ENCODE measurements at regions of chr20 and their contacts with region 1.

Region 1: DNA sequence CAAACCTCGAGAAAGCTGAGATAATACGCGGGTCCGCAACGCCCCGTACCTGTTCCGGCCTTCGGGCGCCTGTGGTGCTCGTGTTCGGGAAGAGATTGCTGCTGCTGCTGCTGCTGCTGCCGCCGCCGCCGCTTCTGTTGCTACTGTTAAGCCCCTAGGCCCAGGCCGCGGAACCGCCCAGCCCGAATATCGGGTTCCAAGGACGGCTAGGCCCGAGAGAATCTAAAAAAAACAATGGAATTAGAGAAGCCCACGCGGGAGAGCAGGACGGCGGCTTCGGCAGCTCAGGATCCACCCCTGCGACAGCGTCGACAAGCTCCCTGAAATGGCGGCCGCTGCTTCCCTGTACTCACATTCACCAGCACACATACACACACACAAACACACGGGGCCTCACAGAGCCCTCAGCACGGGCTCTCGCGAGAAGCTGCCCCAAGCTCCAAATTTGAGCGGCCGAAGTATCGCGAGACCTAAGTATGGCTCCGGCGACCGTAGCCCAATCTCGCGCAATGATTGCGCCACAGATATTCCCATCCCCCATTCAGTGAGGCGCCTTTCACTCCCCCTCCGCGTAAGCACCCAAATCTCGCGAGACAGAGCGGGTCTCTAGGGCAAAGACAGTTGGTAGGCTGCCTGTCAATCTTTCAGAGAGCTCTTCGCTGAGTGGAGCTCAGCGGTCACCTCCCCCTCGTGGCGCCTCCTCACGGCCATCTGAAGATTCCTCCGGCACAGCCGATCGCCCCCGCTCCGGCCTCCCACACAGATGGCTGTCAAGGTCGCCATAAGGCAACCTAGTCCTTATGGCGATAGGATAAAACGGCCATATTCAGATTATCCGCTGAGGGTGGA is at the start of gene RBM39:
- DNase-seq: peak; percentile 100
- H3K4me3 ChIP-seq: peak within 1 kb of the TSS; percentile 67 to 100 (median 95)
- H3K27ac ChIP-seq: peak within 1 kb of the TSS; percentile 100
- H3K4me1 ChIP-seq: peaks cover 24 to 55% (median 37%) of the 10 kb centered on the region in 4 experiments
- H3K27me3 ChIP-seq: no peaks in the 10 kb centered on the region

Region 2: GRCh38 chr20:35771689-35772562 is 29.8 kb after region 1 on chr20 and contains the start of gene PHF20:
- CTCF ChIA-PET with region 1: interaction called, 32 read pairs
- POLR2A ChIA-PET with region 1: interaction called, 51 read pairs
- DNase-seq: peak; percentile 98 to 99 (median 98)
- H3K4me3 ChIP-seq: peak within 1 kb of the TSS; percentile 32 to 91 (median 76)
- H3K27ac ChIP-seq: peak within 1 kb of the TSS; percentile 91 to 94
- H3K4me1 ChIP-seq: peaks cover 37 to 85% (median 71%) of the 10 kb centered on the region in 4 experiments
- H3K27me3 ChIP-seq: no peaks in the 10 kb centered on the region

Region 3: GRCh38 chr20:36128463-36129159 is 386.5 kb after region 1 on chr20:
- CTCF ChIA-PET with region 1: no interaction called
- POLR2A ChIA-PET with region 1: no interaction called
- DNase-seq: no peak
- H3K4me3 ChIP-seq: no peak overlapping the region
- H3K27ac ChIP-seq: no peak overlapping the region
- H3K4me1 ChIP-seq: no peaks in the 10 kb centered on the region
- H3K27me3 ChIP-seq: no peaks in the 10 kb centered on the region